ENCODE measurements at regions of chr14 and their contacts with region 1.

Region 1: GRCh38 chr14:68248481-68249255 is 429.1 kb downstream of the RAD51B start:
- DNase-seq: peak in 2 of 3 donors; percentile 48 to 58
- ATAC-seq: peak; percentile 70
- H3K4me3 ChIP-seq: no peak overlapping the region
- H3K4me1 ChIP-seq: peaks cover 36% of the 10 kb centered on the region
- CTCF ChIP-seq: peak; percentile 24

Region 2: GRCh38 chr14:67943947-67944346 is 304.7 kb before region 1 on chr14:
- intact Hi-C with region 1: loop called in 1 of 2 experiments (anchors 5 kb)
- DNase-seq: peak in 1 of 3 donors; percentile 95
- ATAC-seq: peak; percentile 87
- H3K4me3 ChIP-seq: no peak overlapping the region
- H3K4me1 ChIP-seq: peaks cover 16% of the 10 kb centered on the region
- CTCF ChIP-seq: no peak

Region 3: DNA sequence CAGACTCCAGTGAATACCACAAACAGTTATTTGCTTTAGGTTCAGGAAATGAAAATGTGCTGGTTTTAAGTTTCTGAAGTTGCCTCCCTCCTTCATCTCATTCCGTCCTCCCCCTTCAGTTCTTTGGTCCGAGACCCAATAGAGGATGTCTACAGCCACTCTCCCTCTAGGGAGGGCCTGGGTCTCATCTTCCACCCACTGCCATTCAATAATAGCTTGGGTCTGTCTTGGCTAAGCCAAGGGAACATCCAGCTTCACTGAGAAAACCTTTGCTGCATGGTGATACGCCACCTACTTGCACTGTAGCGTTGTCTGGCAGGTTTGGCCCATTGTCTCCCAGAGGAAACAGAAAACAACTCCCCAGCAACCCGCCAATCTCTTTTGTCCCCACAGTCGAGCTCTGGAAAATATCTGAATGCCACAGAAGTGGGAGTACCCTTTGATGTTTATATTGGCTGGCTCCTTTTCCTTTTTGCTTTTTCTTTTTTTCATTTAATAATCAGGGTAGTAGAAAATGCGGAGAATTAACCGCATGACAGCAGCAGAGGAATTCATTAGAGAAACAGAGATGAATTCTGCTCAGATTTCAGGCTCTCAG is 49.0 kb before region 1 on chr14:
- intact Hi-C with region 1: no loop called
- DNase-seq: no peak
- ATAC-seq: no peak
- H3K4me3 ChIP-seq: no peak overlapping the region
- H3K4me1 ChIP-seq: no peaks in the 10 kb centered on the region
- CTCF ChIP-seq: no peak

Region 4: DNA sequence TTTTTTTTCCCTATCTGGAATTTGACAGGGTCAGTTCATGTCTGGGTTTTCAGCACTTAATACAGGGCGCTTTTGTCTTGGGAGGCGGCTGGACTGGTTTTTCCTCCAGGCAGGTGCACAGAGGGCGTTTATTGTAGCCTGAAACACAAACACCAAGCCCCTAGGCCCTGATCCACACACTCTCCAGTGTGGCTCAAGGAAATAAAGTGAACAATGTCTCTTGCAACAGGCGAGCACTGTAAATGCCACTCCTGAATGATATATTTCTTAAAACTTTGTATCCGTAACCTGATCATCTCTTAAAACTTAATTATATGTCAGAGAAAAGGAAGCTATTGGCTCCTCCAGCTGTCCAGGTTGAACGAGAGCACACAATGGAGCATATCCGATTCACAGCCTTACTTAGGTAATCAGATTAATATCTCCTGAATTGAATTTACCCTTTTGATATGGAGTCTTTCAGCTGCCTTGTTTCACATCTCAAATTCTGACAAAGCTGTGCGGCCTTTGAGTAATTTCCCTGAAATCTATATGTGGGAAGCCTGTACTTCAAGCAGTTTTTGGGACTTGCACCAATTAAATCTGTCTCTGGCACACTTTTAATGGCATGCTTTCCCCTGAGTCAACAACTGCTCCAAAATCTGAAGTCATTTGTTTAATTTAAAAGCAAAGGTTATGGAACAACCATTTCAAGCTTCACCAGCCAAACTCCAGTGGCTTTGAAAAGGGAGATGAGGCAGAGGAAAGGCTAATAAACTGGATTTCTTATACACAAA is 58.5 kb after region 1 on chr14:
- intact Hi-C with region 1: loop called in 1 of 2 experiments (anchors 10 kb)
- DNase-seq: peak; percentile 60 to 68 (median 67)
- ATAC-seq: peak; percentile 95
- H3K4me3 ChIP-seq: no peak overlapping the region
- H3K4me1 ChIP-seq: peaks cover 14% of the 10 kb centered on the region
- CTCF ChIP-seq: no peak

Region 5: GRCh38 chr14:68795597-68796417 is 547.1 kb after region 1 on chr14:
- intact Hi-C with region 1: loop called in 1 of 2 experiments (anchors 5 kb)
- DNase-seq: peak; percentile 87 to 92 (median 92)
- ATAC-seq: peak; percentile 72
- H3K4me3 ChIP-seq: peak overlapping the region; percentile 65
- H3K4me1 ChIP-seq: no peaks in the 10 kb centered on the region
- CTCF ChIP-seq: peak; percentile 86

Region 6: DNA sequence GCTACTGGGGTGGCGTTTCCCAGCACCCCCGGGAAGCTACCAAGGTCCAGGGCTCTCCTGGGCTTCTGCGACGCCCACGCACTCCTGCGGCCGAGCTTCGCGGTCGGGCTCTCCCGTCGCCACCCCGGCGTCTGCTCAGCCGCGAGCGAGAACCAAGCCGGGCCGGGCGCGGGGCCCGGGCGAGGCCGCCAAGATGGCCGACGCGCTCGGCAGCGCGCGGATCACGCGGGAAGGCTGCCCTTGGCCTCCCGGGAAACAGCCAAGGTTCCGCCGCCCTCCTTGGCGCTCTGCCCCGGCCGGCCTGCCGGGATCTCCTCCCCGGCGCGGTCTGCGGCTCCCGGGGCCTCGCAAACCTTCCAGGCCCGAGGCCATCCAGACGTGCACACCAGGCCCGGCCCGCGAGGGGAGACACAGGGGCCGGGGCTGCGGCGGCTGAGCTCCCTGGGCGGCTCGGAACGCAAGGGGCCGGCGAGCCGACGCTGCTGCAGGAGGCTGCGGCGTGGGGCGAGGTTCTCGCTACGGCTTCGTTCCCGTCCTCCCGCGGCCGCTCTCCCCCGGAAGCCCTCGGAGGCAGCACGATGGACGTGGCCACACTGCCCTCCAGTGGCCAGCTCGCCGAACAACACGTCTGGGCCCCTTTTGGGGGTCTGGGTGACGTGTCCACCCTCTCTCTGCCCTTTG is 567.7 kb after region 1 on chr14:
- intact Hi-C with region 1: loop called (anchors 10 kb)
- DNase-seq: peak; percentile 89 to 95 (median 92)
- ATAC-seq: peak; percentile 92
- H3K4me3 ChIP-seq: peak overlapping the region; percentile 26
- H3K4me1 ChIP-seq: peaks cover 49% of the 10 kb centered on the region
- CTCF ChIP-seq: peak; percentile 98